Panc1 (cell line): ENCODE measurements at regions of chr1 and their contacts with region 1.

Region 1: GRCh38 chr1:228420963-228421826 is 4.5 kb upstream of the TRIM17 start:
- DNase-seq: no peak
- ATAC-seq: no peak
- H3K4me3 ChIP-seq: no peak overlapping the region
- H3K27ac ChIP-seq: no peak overlapping the region
- H3K4me1 ChIP-seq: no peaks in the 10 kb centered on the region
- H3K27me3 ChIP-seq: no peaks in the 10 kb centered on the region
- CTCF ChIP-seq: no peak

Region 2: GRCh38 chr1:228407118-228408042 is 13.8 kb before region 1 on chr1:
- CTCF ChIA-PET with region 1: no interaction called
- POLR2A ChIA-PET with region 1: interaction called, 18 read pairs
- in situ Hi-C with region 1: no loop called
- intact Hi-C with region 1: no loop called
- DNase-seq: no peak
- ATAC-seq: peak; percentile 74
- H3K4me3 ChIP-seq: peak overlapping the region; percentile 89 to 90
- H3K27ac ChIP-seq: peak overlapping the region; percentile 91
- H3K4me1 ChIP-seq: peaks cover 20% of the 10 kb centered on the region
- H3K27me3 ChIP-seq: no peaks in the 10 kb centered on the region
- CTCF ChIP-seq: no peak

Region 3: GRCh38 chr1:228452194-228453021 is 31.2 kb after region 1 on chr1:
- CTCF ChIA-PET with region 1: no interaction called
- POLR2A ChIA-PET with region 1: no interaction called
- in situ Hi-C with region 1: no loop called
- intact Hi-C with region 1: loop called (anchors 2 kb)
- DNase-seq: no peak
- ATAC-seq: peak; percentile 43
- H3K4me3 ChIP-seq: no peak overlapping the region
- H3K27ac ChIP-seq: no peak overlapping the region
- H3K4me1 ChIP-seq: peaks cover 13% of the 10 kb centered on the region
- H3K27me3 ChIP-seq: no peaks in the 10 kb centered on the region
- CTCF ChIP-seq: no peak

Region 4: DNA sequence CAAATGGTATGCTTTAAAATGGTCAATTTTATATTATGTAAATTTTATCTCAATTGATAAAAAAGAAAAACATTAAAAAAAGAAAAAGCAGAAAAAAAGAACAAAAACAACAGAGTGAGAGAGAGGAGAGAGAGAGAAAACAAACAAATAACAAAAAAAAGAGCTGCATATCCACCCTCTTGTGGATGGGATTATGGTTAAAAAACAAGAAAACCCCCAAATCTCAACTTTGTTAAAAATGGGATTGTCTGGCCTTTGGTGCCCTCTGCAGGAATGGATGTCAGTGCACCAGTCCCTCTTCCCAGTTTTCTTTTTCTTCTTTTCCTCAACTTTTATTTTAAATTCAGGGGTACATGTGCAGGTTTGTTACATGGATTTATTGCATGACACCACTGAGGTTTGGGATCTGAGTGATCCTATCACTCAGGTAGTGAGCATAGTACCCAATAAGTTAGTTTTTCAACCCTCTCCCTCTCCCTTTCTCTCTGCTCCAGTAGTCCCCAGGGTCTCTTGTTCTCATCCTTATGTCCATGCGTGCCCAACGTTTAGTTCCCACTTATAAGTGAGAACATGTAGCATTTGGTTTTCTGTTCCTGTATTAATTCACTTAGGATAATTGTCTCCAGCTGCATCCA is 94.1 kb after region 1 on chr1:
- CTCF ChIA-PET with region 1: no interaction called
- POLR2A ChIA-PET with region 1: no interaction called
- in situ Hi-C with region 1: no loop called
- intact Hi-C with region 1: no loop called
- DNase-seq: no peak
- ATAC-seq: 0 out of 2 replicates have a peak, but pooled peaks have one; percentile 61
- H3K4me3 ChIP-seq: no peak overlapping the region
- H3K27ac ChIP-seq: no peak overlapping the region
- H3K4me1 ChIP-seq: no peaks in the 10 kb centered on the region
- H3K27me3 ChIP-seq: peaks cover 9% of the 10 kb centered on the region
- CTCF ChIP-seq: peak; percentile 79